Endothelial cell of umbilical vein (primary cell): ENCODE measurements at regions of chr1 and their contacts with region 1.

Region 1: GRCh38 chr1:46724991-46725735 is 6.2 kb upstream of the EFCAB14 start:
- DNase-seq: peak; percentile 82
- H3K4me3 ChIP-seq: no peak overlapping the region
- H3K27ac ChIP-seq: no peak overlapping the region
- H3K4me1 ChIP-seq: peaks cover 21% of the 10 kb centered on the region
- H3K27me3 ChIP-seq: peaks cover 15 to 16% of the 10 kb centered on the region in 2 experiments
- CTCF ChIP-seq: peak; percentile 81 to 83
- POLR2A ChIP-seq: no peak

Region 2: DNA sequence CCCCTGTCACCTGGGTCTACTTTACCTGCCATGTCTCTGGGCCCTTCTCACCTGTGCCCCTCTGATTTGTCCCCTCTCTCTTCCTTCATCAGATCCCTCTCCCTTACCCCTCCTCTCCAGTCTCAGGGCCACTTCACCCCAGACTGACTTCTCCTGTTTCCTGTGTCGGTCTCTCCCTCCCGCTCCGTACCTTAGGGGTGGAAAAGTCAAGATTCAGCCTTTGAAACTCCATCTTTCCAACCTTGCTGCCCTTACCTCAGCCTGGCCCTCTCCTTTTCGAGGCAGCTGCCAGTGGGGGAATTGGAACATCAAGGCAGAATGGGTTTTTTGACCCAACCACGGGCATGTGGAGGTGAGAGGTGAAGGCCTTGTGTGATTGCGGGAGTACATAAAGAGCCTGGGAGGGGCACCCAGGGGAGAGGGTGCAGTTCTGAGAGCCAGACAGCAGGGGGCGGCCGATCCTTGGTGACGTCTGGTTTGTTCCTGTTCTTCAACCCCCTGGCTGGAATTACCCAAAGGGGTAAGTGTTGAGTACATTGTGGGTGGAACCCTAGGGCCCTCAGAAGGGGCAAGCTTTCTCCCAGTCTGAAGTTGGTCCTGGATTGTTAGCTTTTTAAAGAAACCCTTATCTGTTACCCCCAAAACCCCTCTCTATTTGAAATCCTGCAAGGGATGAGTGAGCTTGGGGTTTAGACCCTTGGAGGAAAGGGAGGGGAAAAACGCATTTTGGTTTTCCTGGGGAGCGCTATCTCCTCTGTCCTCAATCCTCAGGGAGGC is 247.8 kb before region 1 on chr1:
- CTCF ChIA-PET with region 1: interaction called, 7 read pairs
- POLR2A ChIA-PET with region 1: no interaction called
- dilution Hi-C with region 1: no loop called
- intact Hi-C with region 1: loop called (anchors 10 kb)
- DNase-seq: peak; percentile 63
- H3K4me3 ChIP-seq: no peak overlapping the region
- H3K27ac ChIP-seq: no peak overlapping the region
- H3K4me1 ChIP-seq: no peaks in the 10 kb centered on the region
- H3K27me3 ChIP-seq: peaks cover 36 to 39% of the 10 kb centered on the region in 2 experiments
- CTCF ChIP-seq: peak; percentile 81 to 90
- POLR2A ChIP-seq: no peak

Region 3: GRCh38 chr1:46533179-46533864 is 191.8 kb before region 1 on chr1:
- CTCF ChIA-PET with region 1: interaction called, 34 read pairs
- POLR2A ChIA-PET with region 1: no interaction called
- dilution Hi-C with region 1: no loop called
- intact Hi-C with region 1: loop called (anchors 1 kb)
- DNase-seq: peak; percentile 30
- H3K4me3 ChIP-seq: peak overlapping the region in 2 of 3 experiments; percentile 11 to 14
- H3K27ac ChIP-seq: no peak overlapping the region
- H3K4me1 ChIP-seq: peaks cover 2% of the 10 kb centered on the region
- H3K27me3 ChIP-seq: peaks cover 25 to 42% of the 10 kb centered on the region in 2 experiments
- CTCF ChIP-seq: no peak
- POLR2A ChIP-seq: no peak

Region 4: DNA sequence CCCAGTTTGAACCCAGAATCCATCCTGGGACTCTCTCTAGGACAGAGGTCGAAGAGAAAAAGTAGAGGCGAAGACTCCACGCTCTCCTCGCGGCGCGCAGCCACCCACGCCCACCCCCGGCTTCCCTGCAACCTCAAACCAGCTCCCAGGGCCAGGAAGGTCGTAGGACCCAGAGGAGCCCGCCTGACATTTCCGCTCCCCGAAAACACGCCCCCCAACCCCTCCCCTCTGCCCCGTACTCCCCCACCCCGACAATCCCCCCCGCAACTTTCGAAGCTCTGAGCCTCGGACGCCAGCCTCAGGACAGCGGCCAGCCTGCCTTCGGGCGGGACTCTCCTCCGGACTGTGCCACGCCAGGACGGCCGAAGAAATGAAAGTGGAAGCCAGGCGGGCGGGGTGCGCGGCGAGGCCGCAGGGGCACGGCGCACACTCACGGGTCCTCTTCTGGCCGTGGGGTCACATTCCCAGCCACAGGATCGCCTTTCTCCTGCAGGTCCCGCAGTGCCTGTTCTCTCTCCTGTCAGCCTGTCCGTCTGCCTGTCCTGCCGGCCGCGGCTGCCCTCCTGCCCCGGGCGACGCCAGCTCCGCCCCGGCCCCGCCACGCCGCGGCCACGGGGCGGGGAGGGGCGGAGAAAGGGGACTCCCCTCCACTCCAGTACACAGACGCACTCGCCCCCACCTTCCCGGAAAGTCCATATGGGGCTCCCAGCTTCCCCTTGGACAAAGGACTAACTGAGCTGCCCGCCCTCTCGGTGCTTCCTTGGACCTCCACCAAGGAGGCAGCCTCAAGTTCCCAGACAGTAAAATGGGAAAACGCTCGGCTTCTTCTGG is 108.7 kb before region 1 on chr1 and contains the start of gene MOB3C:
- CTCF ChIA-PET with region 1: interaction called, 79 read pairs
- POLR2A ChIA-PET with region 1: interaction called, 4 read pairs
- dilution Hi-C with region 1: no loop called
- intact Hi-C with region 1: no loop called
- DNase-seq: peak; percentile 79
- H3K4me3 ChIP-seq: peak within 1 kb of the TSS; percentile 44 to 70 (median 62)
- H3K27ac ChIP-seq: no peak within 1 kb of the TSS
- H3K4me1 ChIP-seq: peaks cover 11% of the 10 kb centered on the region
- H3K27me3 ChIP-seq: no peaks in the 10 kb centered on the region
- CTCF ChIP-seq: no peak
- POLR2A ChIP-seq: peak; percentile 53
- total RNA-seq, gene MOB3C: 6.5 and 8.4 TPM in 2 replicates

Region 5: GRCh38 chr1:46675549-46676314 is 49.4 kb before region 1 on chr1:
- CTCF ChIA-PET with region 1: interaction called, 12 read pairs
- POLR2A ChIA-PET with region 1: no interaction called
- dilution Hi-C with region 1: no loop called
- intact Hi-C with region 1: no loop called
- DNase-seq: no peak
- H3K4me3 ChIP-seq: no peak overlapping the region
- H3K27ac ChIP-seq: no peak overlapping the region
- H3K4me1 ChIP-seq: peaks cover 2% of the 10 kb centered on the region
- H3K27me3 ChIP-seq: no peaks in the 10 kb centered on the region
- CTCF ChIP-seq: no peak
- POLR2A ChIP-seq: no peak